Heart right ventricle (tissue), 16 donors: ENCODE measurements at regions of chr11 and their contacts with region 1.

Region 1: DNA sequence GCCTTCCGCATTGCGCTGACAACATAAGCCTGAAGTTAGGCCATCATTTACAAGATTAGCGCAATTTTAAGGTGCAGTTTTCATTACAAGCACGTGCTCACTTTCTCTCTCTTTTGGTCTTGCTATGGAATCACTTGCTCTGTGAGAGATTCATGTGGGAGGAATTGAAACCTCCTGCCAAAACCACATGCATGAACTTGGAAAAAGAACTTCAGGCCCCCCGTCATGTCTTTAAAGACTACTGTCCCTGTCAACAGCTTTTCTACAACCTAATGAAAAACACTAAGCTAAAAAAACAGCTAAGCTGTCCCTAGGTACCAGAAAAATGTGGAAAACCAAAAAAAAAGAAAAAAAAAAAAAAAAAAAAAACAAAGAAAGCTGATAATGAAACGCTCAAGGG is 1707.6 kb upstream of the RAG2 start:
- DNase-seq: no peak
- ATAC-seq: peak in 1 of 8 donors; percentile 34
- H3K4me3 ChIP-seq: no peak overlapping the region
- H3K27ac ChIP-seq: no peak overlapping the region
- H3K4me1 ChIP-seq: peaks cover 0 to 4% (median 0%) of the 10 kb centered on the region in 9 donors
- H3K27me3 ChIP-seq: no peaks in the 10 kb centered on the region
- CTCF ChIP-seq: no peak

Region 2: GRCh38 chr11:36953976-36954375 is 1351.7 kb before region 1 on chr11:
- intact Hi-C with region 1: loop called in 1 of 10 experiments (anchors 10 kb)
- DNase-seq: no peak
- ATAC-seq: no peak
- H3K4me3 ChIP-seq: no peak overlapping the region
- H3K27ac ChIP-seq: no peak overlapping the region
- H3K4me1 ChIP-seq: peaks cover 0 to 19% (median 4%) of the 10 kb centered on the region in 9 donors
- H3K27me3 ChIP-seq: no peaks in the 10 kb centered on the region
- CTCF ChIP-seq: no peak

Region 3: GRCh38 chr11:38246451-38246850 is 59.2 kb before region 1 on chr11:
- intact Hi-C with region 1: loop called in 1 of 10 experiments (anchors 10 kb)
- DNase-seq: no peak
- ATAC-seq: no peak
- H3K4me3 ChIP-seq: no peak overlapping the region
- H3K27ac ChIP-seq: no peak overlapping the region
- H3K4me1 ChIP-seq: no peaks in the 10 kb centered on the region
- H3K27me3 ChIP-seq: no peaks in the 10 kb centered on the region
- CTCF ChIP-seq: no peak